ENCODE measurements at regions of chr5 and their contacts with region 1.

Region 1: DNA sequence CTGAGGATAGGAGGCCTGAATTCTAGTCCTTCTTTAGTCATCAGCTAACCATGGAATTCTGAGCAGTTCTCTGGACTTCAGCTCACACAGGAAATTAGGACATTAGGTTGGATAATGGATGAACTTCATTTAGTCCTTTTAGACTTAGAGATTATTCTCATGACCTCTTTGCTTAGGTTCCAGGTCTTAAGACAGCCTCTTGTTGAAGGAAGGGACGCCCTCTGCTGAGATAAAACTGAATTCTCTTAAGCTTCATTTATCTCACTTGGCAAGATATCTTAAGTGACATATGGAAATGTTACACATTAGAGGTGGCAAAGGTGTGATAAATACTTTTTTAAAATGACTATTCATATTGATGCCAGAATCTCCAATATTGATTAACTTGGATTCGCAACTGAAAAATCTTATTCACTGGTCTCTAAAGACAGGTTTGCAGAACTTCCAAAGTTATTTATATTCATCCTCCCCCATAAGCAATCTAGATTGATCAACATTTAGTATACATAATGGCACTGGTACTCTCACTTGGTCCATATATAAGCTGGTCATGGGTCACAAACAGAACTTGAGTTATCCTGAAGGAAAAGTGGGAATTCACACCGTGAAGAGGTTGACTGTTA is 16.9 kb upstream of the ZNF366 start:
- H3K4me3 ChIP-seq: no peak overlapping the region
- H3K27ac ChIP-seq: no peak overlapping the region
- H3K4me1 ChIP-seq: no peaks in the 10 kb centered on the region
- CTCF ChIP-seq: no peak

Region 2: GRCh38 chr5:72402959-72403628 is 121.0 kb before region 1 on chr5:
- CTCF ChIA-PET with region 1: interaction called, 14 read pairs
- POLR2A ChIA-PET with region 1: no interaction called
- H3K4me3 ChIP-seq: no peak overlapping the region
- H3K27ac ChIP-seq: no peak overlapping the region
- H3K4me1 ChIP-seq: no peaks in the 10 kb centered on the region
- CTCF ChIP-seq: no peak

Region 3: DNA sequence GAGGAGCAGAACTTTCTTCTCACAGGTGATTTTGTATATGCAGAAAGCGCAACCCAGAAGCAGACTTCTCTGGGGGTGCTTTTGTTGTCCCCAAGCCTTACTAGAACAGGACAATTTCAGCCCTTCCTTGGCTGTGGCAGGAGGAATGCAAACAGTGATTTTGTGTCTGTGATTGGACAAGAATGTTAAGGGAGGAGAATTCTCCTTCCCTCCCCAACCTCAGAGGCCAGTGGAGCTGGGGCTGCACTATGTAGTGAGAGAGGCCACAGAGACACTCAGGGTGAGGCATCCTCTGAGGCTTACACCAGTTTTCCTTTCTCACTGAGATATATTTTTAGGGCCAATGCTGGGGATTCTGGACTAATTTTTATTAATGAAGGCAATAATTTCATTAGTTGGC is 75.7 kb before region 1 on chr5:
- CTCF ChIA-PET with region 1: interaction called, 12 read pairs
- POLR2A ChIA-PET with region 1: no interaction called
- H3K4me3 ChIP-seq: no peak overlapping the region
- H3K27ac ChIP-seq: no peak overlapping the region
- H3K4me1 ChIP-seq: no peaks in the 10 kb centered on the region
- CTCF ChIP-seq: no peak

Region 4: DNA sequence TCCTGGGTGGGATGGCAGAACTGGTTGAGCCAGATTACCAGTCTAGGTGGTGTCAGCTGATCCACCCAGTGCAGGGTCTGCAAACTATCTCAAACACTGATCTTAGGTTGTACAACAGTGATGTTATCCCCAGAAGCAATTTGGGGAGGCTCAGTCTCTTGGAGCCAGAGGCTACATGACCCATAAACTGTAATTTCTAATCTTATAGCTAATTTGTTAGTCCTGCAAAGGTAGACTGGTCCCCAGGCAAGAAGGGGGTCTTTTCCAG is 11.5 kb before region 1 on chr5:
- CTCF ChIA-PET with region 1: interaction called, 14 read pairs
- POLR2A ChIA-PET with region 1: no interaction called
- H3K4me3 ChIP-seq: no peak overlapping the region
- H3K27ac ChIP-seq: no peak overlapping the region
- H3K4me1 ChIP-seq: no peaks in the 10 kb centered on the region
- CTCF ChIP-seq: no peak